ENCODE measurements at regions of chr7 and their contacts with region 1.

Region 1: DNA sequence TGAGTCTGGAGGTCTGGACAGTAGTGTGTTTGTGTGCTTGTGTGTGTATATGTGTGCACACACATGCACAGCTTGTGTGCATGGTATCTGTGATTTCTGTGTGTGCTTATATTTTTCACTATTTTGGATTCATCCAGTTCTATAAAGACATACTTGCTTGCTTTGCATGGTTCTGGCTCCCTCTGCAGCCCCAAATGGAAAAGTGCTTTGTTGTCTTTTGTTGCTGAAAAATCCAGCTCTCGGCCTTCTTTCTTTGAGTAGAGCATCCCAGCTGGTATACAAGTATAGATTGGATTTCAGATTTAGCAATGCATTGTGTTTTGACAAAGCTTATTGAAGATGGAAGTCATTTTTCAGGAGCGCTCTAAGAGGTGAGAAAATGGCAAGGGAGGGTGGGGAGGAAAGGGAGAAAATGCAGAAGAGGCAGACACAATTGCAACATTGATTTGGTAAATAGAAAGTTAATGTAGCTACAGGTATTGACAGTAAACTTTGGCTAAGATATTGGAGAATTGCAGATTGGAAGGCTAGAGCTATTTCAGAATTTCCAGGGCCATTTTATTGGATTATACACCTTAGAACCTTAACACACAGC is 333.9 kb downstream of the AUTS2 start:
- DNase-seq: no peak

Region 2: DNA sequence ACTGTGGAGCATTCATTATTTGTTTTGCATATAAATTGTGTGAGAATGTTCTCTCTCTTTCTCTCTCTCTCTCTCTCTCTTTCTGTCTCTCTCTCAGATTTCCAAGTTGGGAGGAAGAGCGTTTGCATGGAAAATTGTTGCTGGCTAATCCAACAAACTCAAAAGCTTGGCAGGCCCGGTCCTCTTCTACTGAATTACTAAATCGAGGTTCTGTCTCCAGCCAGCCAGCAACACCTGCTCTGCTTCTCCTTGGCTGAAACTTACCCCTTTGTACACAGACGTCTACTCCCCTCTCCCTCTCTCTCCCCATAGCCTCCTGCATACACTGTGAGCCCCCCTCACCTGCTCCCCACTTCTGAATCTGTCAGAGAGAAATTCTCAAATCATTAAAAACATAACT is 1330.3 kb before region 1 on chr7:
- intact Hi-C with region 1: loop called in 1 of 2 experiments (anchors 10 kb)
- DNase-seq: no peak

Region 3: DNA sequence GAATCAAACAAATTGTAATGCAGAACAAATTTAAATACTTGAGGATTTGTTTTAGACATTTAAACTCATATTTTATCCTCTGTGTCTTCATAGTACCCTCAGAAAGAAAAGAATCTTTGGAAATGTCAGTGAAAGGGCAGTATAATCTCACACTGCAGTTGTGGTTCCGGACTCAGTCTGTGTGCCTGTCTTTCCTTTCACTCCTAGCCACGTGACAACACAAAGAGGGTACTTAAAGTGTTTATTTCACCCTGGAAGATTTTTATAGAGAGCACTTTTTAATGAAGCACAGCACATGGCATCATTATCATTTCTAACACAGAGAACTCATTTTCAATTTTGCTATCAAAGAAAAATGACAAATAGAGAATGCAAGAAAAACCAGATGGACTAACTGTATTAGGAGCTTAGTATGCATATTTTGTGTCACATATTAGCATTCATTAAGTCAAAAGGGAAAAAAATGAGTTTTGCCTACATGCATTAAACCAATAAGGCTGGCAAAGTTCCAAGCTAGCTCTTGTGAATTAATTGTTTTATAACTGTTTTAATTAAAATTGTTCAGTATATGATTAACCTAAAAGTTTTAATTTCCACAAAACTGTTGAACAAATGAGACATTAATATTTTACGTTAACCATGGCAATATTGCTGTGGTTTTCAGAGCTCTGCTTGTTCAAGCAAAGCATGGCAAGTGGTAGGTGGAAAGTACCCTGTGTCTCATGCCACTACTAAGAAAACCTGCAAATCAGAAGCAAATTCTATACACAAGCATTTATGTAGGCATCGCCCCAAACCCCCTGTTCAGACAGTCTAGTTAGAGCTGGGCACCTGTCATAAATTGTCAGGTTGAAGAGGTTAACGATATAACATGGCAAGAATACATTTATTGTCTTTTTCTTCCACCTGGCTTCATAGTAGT is 268.0 kb before region 1 on chr7:
- intact Hi-C with region 1: loop called in 1 of 2 experiments (anchors 10 kb)
- DNase-seq: no peak